ENCODE measurements at regions of chr14 and their contacts with region 1.

Region 1: DNA sequence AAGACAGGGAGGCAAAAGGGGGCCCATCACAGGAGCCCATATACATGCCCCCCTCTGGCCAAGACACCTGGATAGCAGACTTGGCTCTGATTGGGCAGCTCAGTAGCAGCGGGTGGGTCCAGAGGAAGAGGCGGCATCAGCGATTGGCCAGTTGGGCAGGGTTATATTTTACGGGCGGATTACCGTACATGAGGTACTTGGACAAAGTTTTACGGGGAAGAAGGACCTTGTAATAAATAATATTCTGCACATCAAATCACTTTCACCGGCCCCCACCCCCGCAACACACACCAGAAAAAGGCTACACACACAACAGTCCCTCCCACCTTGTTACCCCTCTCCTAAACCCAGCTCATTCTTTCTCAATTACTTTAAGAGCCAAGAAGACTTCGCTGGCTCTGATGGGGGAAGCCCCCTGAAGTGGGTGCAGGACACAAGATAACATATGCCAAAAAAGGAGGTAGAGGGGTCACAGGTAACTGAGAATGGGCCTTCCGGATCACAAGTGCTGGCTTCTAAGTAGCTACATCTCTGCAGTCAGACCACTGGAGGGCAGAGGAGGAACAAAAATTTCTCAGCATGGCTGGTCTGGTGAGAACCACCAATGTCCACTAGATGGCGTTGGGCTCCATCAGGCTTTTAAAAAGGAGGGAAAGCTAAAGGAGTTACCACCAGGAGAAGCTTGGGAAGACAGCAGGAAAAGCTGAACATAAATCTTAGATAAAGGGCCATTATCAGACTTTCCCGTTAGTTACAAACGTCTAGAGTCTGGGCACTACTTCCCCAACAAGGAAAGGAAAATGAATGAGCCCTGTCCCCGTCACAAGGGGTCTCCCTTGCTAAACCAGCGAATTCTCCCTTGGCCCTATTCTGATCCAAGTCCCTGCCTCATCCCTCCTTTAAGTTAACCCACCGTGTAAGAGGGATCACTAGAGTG is 11.4 kb upstream of the CDH24 start:
- DNase-seq: peak; percentile 91
- CTCF ChIP-seq: peak; percentile 95

Region 2: DNA sequence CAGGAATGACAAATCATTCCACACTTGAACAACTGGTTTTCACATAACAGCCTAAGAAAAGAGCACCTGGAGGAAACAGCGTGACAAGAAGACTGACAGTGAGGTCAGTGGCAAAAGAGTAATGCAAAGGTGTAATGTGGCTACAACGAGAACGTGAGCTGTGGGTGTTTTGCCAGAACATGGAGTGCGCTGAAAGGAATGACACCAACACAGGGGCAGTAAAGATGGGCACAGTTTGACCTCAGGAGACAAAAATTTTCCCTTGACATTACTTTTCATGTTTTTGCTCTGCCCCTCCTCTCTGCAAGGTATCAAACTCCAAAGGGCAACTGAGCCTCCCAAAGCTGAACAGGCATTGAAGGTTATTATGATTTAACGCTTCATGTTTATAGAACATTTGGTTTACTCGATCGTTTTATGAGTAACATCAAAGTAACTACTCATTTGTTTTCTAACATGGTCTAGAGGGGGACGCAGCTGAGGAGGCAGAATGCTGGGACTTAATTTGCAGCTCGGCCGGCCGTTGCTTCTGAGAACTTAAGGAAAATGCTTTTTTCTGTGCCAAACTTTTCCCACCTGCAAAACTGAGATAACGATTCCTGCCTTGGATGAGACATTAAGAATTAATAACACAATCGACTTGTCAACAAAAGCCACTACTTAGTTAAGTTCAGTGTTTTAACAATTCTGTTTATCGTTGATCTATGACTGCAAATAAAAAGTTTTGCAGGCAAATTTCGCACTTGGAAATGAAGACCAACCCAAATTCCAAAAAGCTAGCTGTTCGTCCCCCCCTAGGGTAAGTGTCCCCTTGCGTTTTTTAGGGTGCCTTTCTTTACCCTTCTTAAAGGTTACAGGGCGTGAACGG is 112.8 kb before region 1 on chr14:
- CTCF ChIA-PET with region 1: interaction called, 15 read pairs
- POLR2A ChIA-PET with region 1: no interaction called
- DNase-seq: no peak
- CTCF ChIP-seq: no peak

Region 3: GRCh38 chr14:22986508-22987054 is 82.2 kb before region 1 on chr14:
- CTCF ChIA-PET with region 1: interaction called, 834 read pairs
- POLR2A ChIA-PET with region 1: no interaction called
- DNase-seq: peak; percentile 85
- CTCF ChIP-seq: peak; percentile 93

Region 4: DNA sequence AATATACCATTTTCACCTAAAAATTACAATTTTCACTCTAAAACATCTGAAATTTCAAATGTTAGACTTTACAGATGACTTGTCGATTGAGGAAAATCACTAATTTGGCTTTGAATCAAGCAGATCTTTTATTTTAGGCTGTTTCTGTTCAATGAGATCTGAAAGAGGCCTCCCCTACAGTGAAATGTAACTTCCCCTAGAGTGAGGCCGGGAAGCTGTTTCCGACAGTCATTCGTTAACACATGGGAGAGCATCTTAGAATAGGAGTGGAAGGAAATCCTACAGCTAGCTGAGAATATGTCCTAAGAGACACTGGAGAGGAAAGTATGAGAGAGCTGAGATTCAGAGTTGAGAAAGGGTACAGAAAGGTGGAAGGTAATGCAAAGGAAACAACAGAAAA is 53.1 kb before region 1 on chr14:
- CTCF ChIA-PET with region 1: interaction called, 11 read pairs
- POLR2A ChIA-PET with region 1: no interaction called
- DNase-seq: no peak
- CTCF ChIP-seq: no peak

Region 5: GRCh38 chr14:23057757-23058653 is 10.7 kb before region 1 on chr14:
- CTCF ChIA-PET with region 1: interaction called, 159 read pairs
- POLR2A ChIA-PET with region 1: interaction called, 5 read pairs
- DNase-seq: peak; percentile 90
- CTCF ChIP-seq: peak; percentile 96

Region 6: GRCh38 chr14:23095196-23096108 is 26.7 kb after region 1 on chr14 and contains the start of gene C14orf119:
- CTCF ChIA-PET with region 1: interaction called, 47 read pairs
- POLR2A ChIA-PET with region 1: interaction called, 7 read pairs
- DNase-seq: peak; percentile 99
- CTCF ChIP-seq: no peak

Region 7: GRCh38 chr14:23301288-23301968 is 232.7 kb after region 1 on chr14:
- CTCF ChIA-PET with region 1: interaction called, 13 read pairs
- POLR2A ChIA-PET with region 1: no interaction called
- DNase-seq: peak; percentile 97
- CTCF ChIP-seq: peak; percentile 85

Measured in GM10248 (cell line).